Activated CD4-positive, alpha-beta T cell treated with anti-CD3 and anti-CD28 coated beads, Interleukin-2, amount 10 ng/mL, durations not matched to agents 24 days and 14 days (primary cell): ENCODE measurements at regions of chr3 and their contacts with region 1.

Region 1: DNA sequence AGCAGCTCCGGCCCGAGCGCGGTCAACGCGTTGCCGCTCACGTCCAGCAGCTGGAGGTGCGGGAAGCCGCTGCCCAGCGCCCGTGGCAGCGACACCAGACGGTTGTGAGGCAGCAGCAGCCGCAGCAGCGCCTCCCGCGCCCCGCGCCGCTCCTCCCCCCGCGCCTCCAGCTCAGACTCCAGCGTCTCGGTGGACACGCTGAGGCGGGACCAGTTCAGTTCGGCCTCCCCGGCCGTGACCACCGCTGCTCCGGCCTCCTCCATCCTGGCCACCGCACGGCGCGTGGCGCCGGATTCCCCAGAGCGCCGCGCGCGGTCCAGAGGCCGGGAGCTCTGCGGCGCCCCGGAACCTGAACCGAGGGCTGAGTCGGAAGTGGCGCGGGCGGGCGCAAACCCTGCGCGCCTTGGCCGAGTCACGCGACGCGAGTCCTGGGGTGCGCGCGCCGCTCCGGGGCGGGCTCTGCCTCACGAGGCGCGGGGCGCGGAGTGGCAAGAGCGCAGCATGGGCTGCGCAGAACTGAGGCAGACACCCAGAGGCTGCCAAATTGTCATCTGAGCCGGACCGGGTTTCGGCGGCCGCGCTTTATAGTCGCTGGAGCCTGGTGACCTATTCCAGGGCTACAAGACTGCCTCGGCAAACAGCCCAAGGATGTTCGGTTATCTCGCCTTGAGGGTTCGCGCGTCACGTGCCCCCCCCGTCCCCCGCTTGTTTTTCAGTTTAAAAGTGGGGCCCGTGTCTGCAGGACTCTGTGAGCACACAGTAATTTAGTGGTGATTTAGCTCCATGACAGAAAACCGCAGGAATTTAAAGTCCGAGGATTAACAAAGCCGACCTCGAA is at the start of gene LRRC58:
- DNase-seq: peak; percentile 97
- H3K4me3 Mint-ChIP-seq: peak within 1 kb of the TSS; percentile 91
- H3K27ac Mint-ChIP-seq: peak within 1 kb of the TSS; percentile 89
- H3K4me1 Mint-ChIP-seq: peaks cover 44% of the 10 kb centered on the region
- H3K27me3 Mint-ChIP-seq: peaks cover 25% of the 10 kb centered on the region
- total RNA-seq, gene LRRC58: 28.1 and 29.4 TPM in 2 replicates

Region 2: DNA sequence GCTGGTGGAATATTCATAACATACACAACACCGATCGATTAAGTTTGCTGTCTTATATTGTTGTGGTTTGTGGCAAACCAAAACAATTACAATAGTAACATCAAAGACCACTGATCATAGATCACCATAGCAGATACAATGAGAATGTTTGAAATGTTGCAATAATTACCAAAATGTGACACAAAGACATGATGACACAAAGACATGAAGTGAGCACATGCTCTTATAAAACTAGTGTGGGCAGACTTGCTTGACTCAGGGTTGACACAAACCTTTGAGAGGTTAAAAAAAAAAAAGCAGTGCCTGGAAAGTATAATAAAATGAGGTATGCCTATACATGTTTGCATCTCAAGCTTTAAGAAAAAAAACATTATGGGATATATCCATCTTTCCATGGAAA is 437.0 kb before region 1 on chr3:
- intact Hi-C with region 1: loop called (anchors 5 kb)
- DNase-seq: no peak
- H3K4me3 Mint-ChIP-seq: peak overlapping the region; percentile 49
- H3K27ac Mint-ChIP-seq: peak overlapping the region; percentile 79
- H3K4me1 Mint-ChIP-seq: peaks cover 20% of the 10 kb centered on the region
- H3K27me3 Mint-ChIP-seq: no peaks in the 10 kb centered on the region

Region 3: DNA sequence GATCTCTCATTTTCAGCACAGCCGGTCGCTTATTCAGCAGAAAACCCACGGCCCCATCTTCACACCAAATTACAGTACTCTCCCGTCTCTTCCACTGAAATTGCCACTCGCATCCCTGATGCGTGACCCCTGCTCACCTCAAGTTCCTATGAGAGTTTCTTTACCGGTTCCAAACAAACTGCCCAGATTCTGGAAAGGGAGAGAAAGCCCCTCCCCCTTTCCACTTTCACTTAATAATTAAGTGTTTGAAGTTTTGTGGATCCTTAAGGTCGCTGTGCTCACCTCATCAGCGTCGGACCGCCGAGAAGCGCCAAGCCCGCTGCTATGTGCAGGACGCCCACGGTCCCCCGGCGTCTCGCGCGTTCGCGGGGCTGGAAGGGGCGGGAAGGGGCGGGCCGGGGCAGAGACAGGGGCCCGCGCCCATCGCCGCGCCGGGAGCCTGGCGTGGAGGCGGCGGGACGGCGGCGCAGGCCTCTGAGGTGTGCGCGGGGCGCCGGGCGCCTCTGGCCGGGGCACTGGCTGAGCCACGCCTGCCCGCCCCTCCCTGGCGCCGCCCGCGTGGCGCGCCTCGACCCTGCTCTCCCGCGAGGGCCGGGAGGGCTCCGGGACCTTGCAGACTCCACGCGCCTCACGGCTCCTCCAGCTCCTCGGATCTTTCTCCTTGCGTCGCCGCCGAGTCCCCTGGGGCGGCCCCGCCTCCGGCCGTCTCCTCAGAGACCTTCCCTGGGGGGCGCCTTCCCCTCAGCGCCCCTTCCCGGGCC is 64.3 kb before region 1 on chr3 and contains the start of gene GPR156:
- intact Hi-C with region 1: no loop called
- DNase-seq: no peak
- H3K4me3 Mint-ChIP-seq: peak within 1 kb of the TSS; percentile 25
- H3K27ac Mint-ChIP-seq: no peak within 1 kb of the TSS
- H3K4me1 Mint-ChIP-seq: no peaks in the 10 kb centered on the region
- H3K27me3 Mint-ChIP-seq: peaks cover 58% of the 10 kb centered on the region
- total RNA-seq, gene GPR156: 0.12 TPM in 1 of 2 replicates, not detected in the other

Region 4: GRCh38 chr3:120338517-120338916 is 10.7 kb before region 1 on chr3:
- intact Hi-C with region 1: loop called (anchors 1 kb)
- DNase-seq: no peak
- H3K4me3 Mint-ChIP-seq: no peak overlapping the region
- H3K27ac Mint-ChIP-seq: peak overlapping the region; percentile 20
- H3K4me1 Mint-ChIP-seq: peaks cover 16% of the 10 kb centered on the region
- H3K27me3 Mint-ChIP-seq: no peaks in the 10 kb centered on the region

Region 5: DNA sequence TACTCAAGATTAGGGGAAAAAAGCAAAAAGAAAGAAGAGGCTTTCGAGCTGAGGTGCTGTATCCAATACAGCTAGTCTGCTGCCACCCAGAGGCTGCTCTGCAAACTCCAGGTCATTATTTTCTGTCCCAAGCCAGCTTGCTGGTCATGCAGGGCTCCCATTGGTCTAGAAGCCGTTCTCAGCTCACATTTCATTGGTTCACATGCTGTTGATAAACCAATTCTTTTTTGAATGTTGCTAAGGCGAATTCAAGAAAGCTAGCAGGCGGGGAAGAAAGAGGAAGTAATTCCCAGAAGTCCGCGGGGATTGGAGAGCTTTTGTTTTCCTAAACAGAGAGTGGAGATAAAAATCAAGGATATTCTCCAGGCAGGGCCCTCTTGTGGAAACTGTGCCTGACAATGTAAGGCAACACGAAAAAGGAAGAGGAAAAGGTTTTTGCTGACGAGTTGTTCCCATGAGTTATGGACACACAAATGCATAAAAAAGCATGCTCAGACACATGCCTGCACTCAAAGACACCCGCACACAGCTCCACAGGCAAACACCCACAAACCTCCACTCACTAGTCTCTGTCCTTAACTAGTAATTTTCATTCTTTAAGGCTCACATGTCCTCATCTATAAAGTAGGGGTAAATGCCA is 68.2 kb after region 1 on chr3:
- intact Hi-C with region 1: loop called (anchors 2 kb)
- DNase-seq: peak; percentile 95
- H3K4me3 Mint-ChIP-seq: peak overlapping the region; percentile 90
- H3K27ac Mint-ChIP-seq: peak overlapping the region; percentile 46
- H3K4me1 Mint-ChIP-seq: peaks cover 14% of the 10 kb centered on the region
- H3K27me3 Mint-ChIP-seq: peaks cover 5% of the 10 kb centered on the region

Region 6: DNA sequence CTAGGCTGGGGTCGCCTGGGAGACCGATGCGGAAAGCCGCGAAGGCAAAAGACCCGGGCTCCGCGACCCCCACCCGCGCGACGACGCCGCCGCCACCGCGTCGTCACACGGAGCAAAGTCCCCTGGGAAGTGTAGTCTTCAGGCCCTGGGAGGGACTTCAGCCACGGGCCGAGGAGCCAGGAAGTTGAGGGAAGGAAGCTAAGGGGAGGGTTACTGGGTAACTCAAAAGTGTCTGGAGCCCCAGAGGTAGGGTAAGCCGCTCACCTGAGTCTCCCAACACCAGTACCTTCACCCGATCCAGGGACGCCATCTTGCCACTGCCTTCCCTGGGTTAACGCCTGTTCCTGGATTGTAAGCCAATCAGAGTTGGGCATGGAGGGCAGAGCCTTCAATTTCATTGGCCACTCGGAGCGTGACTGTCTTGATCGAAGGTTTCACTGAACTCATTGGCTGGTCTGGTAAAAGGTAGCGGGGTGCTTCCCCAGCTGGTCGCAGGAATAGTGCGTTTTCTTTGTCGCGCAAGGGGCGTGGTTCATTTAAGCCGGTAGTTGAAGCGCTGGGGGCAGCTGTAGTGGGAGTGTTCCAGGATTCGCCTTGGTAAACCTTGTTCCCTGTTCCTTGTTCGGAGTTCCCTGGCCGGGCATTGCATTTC is 393.1 kb after region 1 on chr3 and contains the starts of genes GTF2E1 and RABL3:
- intact Hi-C with region 1: loop called (anchors 1 kb)
- DNase-seq: peak; percentile 99
- H3K4me3 Mint-ChIP-seq: peak within 1 kb of the TSS; percentile 97
- H3K27ac Mint-ChIP-seq: peak within 1 kb of the TSS; percentile 98
- H3K4me1 Mint-ChIP-seq: peaks cover 25% of the 10 kb centered on the region
- H3K27me3 Mint-ChIP-seq: peaks cover 2% of the 10 kb centered on the region
- total RNA-seq, gene GTF2E1: 25.9 and 27.8 TPM in 2 replicates
- total RNA-seq, gene RABL3: 27.6 and 29.3 TPM in 2 replicates